CD8-positive, alpha-beta memory T cell (primary cell): ENCODE measurements at regions of chr19 and their contacts with region 1.

Region 1: DNA sequence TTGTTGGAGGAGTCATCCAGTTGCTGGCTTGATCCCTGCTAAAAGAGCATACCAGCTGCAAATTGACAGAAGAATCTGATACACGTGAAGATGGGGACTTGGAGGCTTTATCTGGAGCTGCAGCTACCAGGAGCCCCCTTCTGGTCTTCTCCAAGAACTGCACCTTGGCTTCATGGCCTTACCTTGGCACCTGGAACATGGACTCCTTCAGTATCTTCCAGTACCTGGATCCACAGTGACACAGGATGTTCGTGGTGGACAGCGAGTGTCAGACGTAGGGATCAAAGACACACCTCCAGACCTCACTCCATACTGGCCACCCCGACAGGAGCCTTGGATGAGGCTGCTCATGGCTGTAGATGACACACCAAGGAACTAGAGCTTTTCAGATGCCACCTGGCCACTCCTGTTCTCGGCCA is 9.9 kb upstream of the ACSBG2 start:
- DNase-seq: peak; percentile 27 to 76 (median 61)
- H3K4me3 ChIP-seq: no peak overlapping the region
- H3K4me3 Mint-ChIP-seq: no peak overlapping the region
- H3K27ac ChIP-seq: no peak overlapping the region
- H3K27ac Mint-ChIP-seq: no peak overlapping the region
- H3K4me1 ChIP-seq: no peaks in the 10 kb centered on the region
- H3K4me1 Mint-ChIP-seq: no peaks in the 10 kb centered on the region
- H3K27me3 ChIP-seq: no peaks in the 10 kb centered on the region
- H3K27me3 Mint-ChIP-seq: peaks cover under 1 to 7% of the 10 kb centered on the region in 2 donors

Region 2: GRCh38 chr19:6048808-6049405 is 76.7 kb before region 1 on chr19:
- CTCF ChIA-PET with region 1: interaction called, 73 read pairs
- POLR2A ChIA-PET with region 1: no interaction called
- DNase-seq: peak; percentile 59 to 83 (median 67)
- H3K4me3 ChIP-seq: no peak overlapping the region
- H3K4me3 Mint-ChIP-seq: no peak overlapping the region
- H3K27ac ChIP-seq: no peak overlapping the region
- H3K27ac Mint-ChIP-seq: no peak overlapping the region
- H3K4me1 ChIP-seq: no peaks in the 10 kb centered on the region
- H3K4me1 Mint-ChIP-seq: peaks cover 3 to 5% (median 4%) of the 10 kb centered on the region in 3 donors
- H3K27me3 ChIP-seq: peaks cover 3% of the 10 kb centered on the region
- H3K27me3 Mint-ChIP-seq: peaks cover 0 to 11% of the 10 kb centered on the region in 2 donors

Region 3: DNA sequence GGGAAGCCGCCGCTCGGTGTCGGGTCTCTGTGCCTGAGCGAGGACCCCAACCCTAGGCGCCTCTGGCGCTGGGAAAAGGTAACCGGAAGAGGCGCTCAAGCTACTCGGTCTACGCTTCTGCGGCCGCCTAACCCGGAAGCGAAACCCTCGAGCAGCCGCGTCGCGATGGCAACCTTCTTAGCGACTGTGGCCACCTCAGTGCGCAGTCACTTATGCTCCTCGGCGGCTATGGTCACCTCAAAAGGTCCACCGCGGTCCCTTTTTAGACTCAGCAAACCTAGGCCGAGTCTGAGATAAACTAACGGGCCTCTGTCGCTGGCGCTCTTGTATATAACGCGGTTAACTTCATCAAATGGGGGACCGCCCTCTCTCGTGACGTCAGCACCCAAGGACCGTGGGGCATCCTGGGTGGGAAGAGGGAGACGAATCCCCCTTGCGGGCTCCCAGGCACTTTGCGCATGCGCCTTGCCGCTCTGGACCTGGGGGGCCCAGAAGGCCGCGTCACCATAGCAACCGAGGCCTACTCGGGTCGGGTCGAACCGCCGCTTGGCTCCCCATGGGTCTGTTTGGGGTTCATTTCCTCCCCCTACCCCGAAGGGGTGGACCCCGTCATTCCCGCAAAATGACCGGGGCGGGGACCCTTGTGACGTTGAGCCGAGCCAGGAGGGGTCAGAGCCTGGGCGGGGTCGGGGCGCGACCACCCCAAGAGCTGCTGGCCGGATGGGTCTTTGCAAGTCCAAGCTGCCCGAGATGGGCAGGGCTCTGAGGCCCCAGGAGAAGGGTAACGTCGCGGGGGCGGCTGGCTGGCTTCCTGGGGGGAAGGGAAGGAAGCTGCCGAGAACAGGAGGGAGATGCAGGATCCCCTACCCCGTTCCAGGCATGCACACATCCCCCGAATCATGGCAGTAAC is 267.7 kb after region 1 on chr19 and contains the start of gene GTF2F1:
- CTCF ChIA-PET with region 1: no interaction called
- POLR2A ChIA-PET with region 1: interaction called, 10 read pairs
- DNase-seq: peak; percentile 92 to 99 (median 95)
- H3K4me3 ChIP-seq: peak within 1 kb of the TSS; percentile 84
- H3K4me3 Mint-ChIP-seq: peak within 1 kb of the TSS; percentile 93 to 98 (median 96)
- H3K27ac ChIP-seq: peak within 1 kb of the TSS; percentile 100
- H3K27ac Mint-ChIP-seq: peak within 1 kb of the TSS; percentile 97 to 100 (median 99)
- H3K4me1 ChIP-seq: peaks cover 24% of the 10 kb centered on the region
- H3K4me1 Mint-ChIP-seq: peaks cover 23 to 29% (median 26%) of the 10 kb centered on the region in 3 donors
- H3K27me3 ChIP-seq: no peaks in the 10 kb centered on the region
- H3K27me3 Mint-ChIP-seq: peaks cover 0 to 5% of the 10 kb centered on the region in 2 donors
- total RNA-seq, gene GTF2F1: 63.3 to 66.2 TPM

Region 4: DNA sequence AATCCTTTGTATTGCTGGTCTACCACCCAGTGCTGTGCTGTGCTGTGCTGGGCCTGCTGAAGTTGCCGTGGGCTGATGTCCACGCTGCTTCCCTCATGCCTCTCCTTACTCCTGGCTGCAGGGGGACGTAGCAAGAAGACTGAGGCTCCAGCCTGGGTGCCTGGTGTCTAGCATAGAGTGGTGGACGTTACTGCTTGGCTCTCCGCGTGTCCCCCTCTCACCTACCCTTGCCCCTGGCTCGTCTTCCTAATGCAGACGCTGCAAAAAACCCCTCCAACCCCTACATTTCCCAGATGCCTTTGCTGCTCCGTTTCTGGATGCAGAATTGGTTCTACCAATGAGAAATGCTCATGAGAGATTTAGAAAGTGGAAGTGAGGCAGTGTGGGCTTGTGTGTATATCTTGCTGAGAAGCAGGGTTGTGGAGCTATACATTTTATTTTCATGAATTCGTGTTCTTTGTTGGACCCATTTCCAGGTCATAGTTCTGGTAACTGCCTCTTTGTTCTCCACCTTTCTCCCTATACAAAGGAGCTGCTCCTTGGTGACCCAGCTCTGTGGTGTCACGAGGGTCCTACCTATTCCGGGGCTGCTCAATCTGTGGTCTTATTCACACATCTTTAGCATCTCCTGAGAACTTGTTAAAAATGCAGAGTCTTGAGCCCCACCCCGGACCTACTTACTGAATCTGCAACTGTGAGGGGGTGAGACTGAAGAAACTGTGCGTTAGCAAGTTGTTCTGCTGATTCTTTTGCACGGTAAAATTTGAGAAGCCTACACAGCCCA is 363.9 kb after region 1 on chr19:
- CTCF ChIA-PET with region 1: no interaction called
- POLR2A ChIA-PET with region 1: no interaction called
- DNase-seq: no peak
- H3K4me3 ChIP-seq: peak overlapping the region; percentile 37
- H3K4me3 Mint-ChIP-seq: peak overlapping the region; percentile 74 to 93 (median 86)
- H3K27ac ChIP-seq: no peak overlapping the region
- H3K27ac Mint-ChIP-seq: peak overlapping the region; percentile 60 to 98 (median 90)
- H3K4me1 ChIP-seq: peaks cover 8% of the 10 kb centered on the region
- H3K4me1 Mint-ChIP-seq: peaks cover 13 to 14% (median 14%) of the 10 kb centered on the region in 3 donors
- H3K27me3 ChIP-seq: no peaks in the 10 kb centered on the region
- H3K27me3 Mint-ChIP-seq: no peaks in the 10 kb centered on the region